CD8-positive, alpha-beta T cell (primary cell): ENCODE measurements at regions of chr5 and their contacts with region 1.

Region 1: GRCh38 chr5:110757118-110757729 is 18.4 kb downstream of the SLC25A46 start:
- DNase-seq: peak in 3 of 9 experiments; percentile 24 to 59 (median 51)
- ATAC-seq: peak; percentile 37
- H3K4me3 ChIP-seq: no peak overlapping the region
- H3K4me3 Mint-ChIP-seq: no peak overlapping the region
- H3K27ac ChIP-seq: no peak overlapping the region
- H3K27ac Mint-ChIP-seq: no peak overlapping the region
- H3K4me1 ChIP-seq: no peaks in the 10 kb centered on the region
- H3K4me1 Mint-ChIP-seq: peaks cover 17% of the 10 kb centered on the region
- H3K27me3 ChIP-seq: no peaks in the 10 kb centered on the region
- H3K27me3 Mint-ChIP-seq: no peaks in the 10 kb centered on the region
- CTCF ChIP-seq: peak; percentile 73

Region 2: DNA sequence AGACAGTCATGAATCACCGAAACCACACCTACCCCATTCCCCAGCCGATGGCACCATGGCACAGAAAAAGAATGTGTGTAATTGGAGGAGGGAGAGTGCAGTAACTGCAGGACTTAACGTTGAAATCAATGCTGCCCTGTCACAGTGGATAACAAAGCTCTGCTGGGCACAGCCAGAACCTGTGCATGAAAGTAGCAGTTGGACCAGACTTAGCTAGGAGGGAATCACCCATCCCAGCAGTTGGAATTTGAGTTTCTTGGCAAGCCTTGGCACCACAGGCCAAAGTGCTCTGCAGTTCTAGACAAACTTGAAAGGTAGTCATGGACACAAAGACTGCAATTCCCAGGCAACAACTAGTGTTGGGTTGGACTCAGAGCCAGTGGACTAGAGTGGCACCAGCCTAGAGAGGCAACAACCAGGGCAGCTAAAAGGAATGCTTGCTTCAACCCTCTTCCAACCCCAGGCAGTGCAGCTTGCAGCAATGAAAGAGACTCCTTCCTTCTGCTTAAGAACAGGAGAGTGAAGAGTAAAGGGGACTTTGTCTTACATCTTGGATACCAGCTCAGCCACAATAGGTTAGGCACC is 49.9 kb before region 1 on chr5:
- CTCF ChIA-PET with region 1: no interaction called
- POLR2A ChIA-PET with region 1: no interaction called
- intact Hi-C with region 1: no loop called
- DNase-seq: no peak
- ATAC-seq: no peak
- H3K4me3 ChIP-seq: no peak overlapping the region
- H3K4me3 Mint-ChIP-seq: no peak overlapping the region
- H3K27ac ChIP-seq: no peak overlapping the region
- H3K27ac Mint-ChIP-seq: no peak overlapping the region
- H3K4me1 ChIP-seq: no peaks in the 10 kb centered on the region
- H3K4me1 Mint-ChIP-seq: no peaks in the 10 kb centered on the region
- H3K27me3 ChIP-seq: no peaks in the 10 kb centered on the region
- H3K27me3 Mint-ChIP-seq: peaks cover 24% of the 10 kb centered on the region
- CTCF ChIP-seq: no peak

Region 3: DNA sequence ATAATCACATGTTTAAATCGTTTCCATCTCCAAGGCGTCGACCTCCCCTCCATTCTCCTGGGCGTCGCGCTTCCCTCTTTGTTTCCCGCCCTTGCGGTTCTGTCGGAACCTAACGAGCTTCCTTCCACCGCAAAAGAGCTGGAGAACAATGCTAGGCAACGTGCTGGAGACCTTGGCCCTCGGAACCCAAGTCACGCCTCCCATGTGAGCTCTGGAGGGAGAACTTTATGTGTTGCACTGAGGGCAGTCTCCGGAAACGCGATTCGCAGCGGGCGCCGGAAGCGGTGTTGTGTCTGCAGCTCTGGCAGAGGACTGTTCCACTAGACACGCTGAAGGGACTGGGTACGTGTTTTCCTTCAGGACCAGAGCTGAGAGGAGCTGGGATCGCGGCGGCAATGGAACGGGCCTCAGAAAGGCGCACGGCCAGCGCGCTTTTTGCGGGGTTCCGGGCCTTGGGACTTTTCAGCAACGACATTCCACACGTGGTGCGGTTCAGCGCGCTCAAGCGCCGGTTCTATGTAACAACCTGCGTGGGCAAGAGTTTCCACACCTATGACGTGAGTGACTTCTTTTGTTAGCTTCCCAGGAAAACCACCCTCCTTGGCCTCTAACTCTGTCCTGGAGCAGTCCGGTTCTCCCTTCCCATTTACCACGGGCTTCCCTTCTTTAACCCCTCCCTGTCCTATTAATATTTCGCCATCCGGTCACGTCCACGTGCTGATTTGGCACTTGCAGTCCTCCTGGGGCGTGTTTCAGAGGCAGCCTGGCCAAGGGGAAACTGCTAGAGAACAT is 335.0 kb after region 1 on chr5 and contains the start of gene WDR36:
- CTCF ChIA-PET with region 1: interaction called, 3 read pairs
- POLR2A ChIA-PET with region 1: no interaction called
- intact Hi-C with region 1: loop called in 1 of 2 experiments (anchors 5 kb)
- DNase-seq: peak; percentile 77 to 94 (median 86)
- ATAC-seq: peak; percentile 92
- H3K4me3 ChIP-seq: peak within 1 kb of the TSS; percentile 96
- H3K4me3 Mint-ChIP-seq: peak within 1 kb of the TSS; percentile 95
- H3K27ac ChIP-seq: peak within 1 kb of the TSS; percentile 86 to 89
- H3K27ac Mint-ChIP-seq: peak within 1 kb of the TSS; percentile 94
- H3K4me1 ChIP-seq: peaks cover 24% of the 10 kb centered on the region
- H3K4me1 Mint-ChIP-seq: peaks cover 38% of the 10 kb centered on the region
- H3K27me3 ChIP-seq: no peaks in the 10 kb centered on the region
- H3K27me3 Mint-ChIP-seq: peaks cover 4% of the 10 kb centered on the region
- CTCF ChIP-seq: no peak
- total RNA-seq, gene WDR36: 29.5 to 32.6 TPM

Region 4: GRCh38 chr5:111472579-111472978 is 715.4 kb after region 1 on chr5:
- CTCF ChIA-PET with region 1: no interaction called
- POLR2A ChIA-PET with region 1: no interaction called
- intact Hi-C with region 1: loop called in 1 of 2 experiments (anchors 10 kb)
- DNase-seq: no peak
- ATAC-seq: no peak
- H3K4me3 ChIP-seq: no peak overlapping the region
- H3K4me3 Mint-ChIP-seq: no peak overlapping the region
- H3K27ac ChIP-seq: peak overlapping the region in 1 of 2 experiments; percentile 7
- H3K27ac Mint-ChIP-seq: peak overlapping the region; percentile 78
- H3K4me1 ChIP-seq: no peaks in the 10 kb centered on the region
- H3K4me1 Mint-ChIP-seq: peaks cover 8% of the 10 kb centered on the region
- H3K27me3 ChIP-seq: no peaks in the 10 kb centered on the region
- H3K27me3 Mint-ChIP-seq: no peaks in the 10 kb centered on the region
- CTCF ChIP-seq: no peak

Region 5: GRCh38 chr5:111530298-111530740 is 773.1 kb after region 1 on chr5:
- CTCF ChIA-PET with region 1: no interaction called
- POLR2A ChIA-PET with region 1: no interaction called
- intact Hi-C with region 1: loop called in 1 of 2 experiments (anchors 10 kb)
- DNase-seq: peak; percentile 63 to 96 (median 83)
- ATAC-seq: peak; percentile 99
- H3K4me3 ChIP-seq: no peak overlapping the region
- H3K4me3 Mint-ChIP-seq: peak overlapping the region; percentile 21
- H3K27ac ChIP-seq: peak overlapping the region; percentile 26 to 81
- H3K27ac Mint-ChIP-seq: peak overlapping the region; percentile 83
- H3K4me1 ChIP-seq: peaks cover 7% of the 10 kb centered on the region
- H3K4me1 Mint-ChIP-seq: peaks cover 12% of the 10 kb centered on the region
- H3K27me3 ChIP-seq: no peaks in the 10 kb centered on the region
- H3K27me3 Mint-ChIP-seq: no peaks in the 10 kb centered on the region
- CTCF ChIP-seq: no peak